Transverse colon (tissue), 4 donors: ENCODE measurements at regions of chr15 and their contacts with region 1.

Region 1: DNA sequence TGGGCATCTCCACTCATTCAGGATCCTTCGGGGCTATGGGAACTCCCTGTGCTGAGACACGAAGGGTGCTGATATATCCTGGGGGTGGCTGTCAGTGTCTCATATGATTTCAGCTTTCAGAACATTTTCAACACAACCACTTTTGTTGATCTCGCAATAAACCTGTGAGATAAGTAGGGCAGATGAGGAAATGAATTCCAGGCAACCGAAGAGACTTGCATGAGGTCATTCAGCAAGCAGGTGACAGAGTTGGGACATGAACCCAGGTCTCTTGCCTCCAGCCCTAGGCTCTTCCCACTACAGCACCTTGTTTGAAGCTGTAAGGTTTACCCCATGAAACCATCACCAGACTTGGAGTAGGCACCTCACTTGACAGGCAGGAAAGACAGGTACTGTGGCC is 16.6 kb downstream of the DUOX1 start:
- DNase-seq: no peak
- H3K4me3 ChIP-seq: no peak overlapping the region
- H3K27ac ChIP-seq: no peak overlapping the region
- H3K4me1 ChIP-seq: no peaks in the 10 kb centered on the region
- H3K27me3 ChIP-seq: no peaks in the 10 kb centered on the region
- CTCF ChIP-seq: no peak
- EP300 ChIP-seq: no peak
- POLR2A ChIP-seq: no peak

Region 2: DNA sequence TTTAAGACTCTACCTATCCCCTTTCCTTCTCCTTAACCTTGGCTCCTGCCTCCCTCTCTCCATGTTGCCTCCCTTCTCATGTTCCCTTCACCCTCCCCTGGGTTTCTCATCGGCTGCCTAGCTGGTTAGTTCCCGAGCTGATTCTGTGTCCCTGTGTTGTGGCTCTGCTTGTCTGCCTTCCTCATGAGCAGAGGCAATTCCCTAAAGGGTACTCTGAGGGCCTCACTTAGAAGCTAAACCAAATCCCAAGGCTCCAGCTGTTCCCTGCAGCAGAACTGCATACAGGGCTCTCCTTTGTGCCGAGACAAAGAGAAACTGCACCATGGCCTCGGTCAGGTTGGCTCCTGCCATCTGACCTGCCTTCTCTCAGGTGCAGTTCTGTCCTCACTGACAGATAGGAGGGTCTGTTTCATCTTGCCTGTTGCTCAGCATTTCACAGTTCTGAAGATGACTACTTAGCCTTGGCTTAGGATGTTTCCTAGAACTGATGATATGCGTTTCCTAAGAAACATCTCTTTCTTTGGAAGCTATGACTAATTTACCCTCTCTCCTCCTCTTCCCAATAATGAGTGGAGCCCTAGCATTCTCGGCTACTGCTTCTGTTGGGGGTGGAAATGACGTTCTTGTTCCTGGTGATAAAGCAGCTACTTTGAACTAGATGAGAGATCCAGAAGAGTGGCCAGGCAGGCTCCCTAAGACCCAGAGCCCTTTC is 10.5 kb after region 1 on chr15:
- in situ Hi-C with region 1: no loop called
- intact Hi-C with region 1: loop called (anchors 1 kb)
- DNase-seq: no peak
- H3K4me3 ChIP-seq: no peak overlapping the region
- H3K27ac ChIP-seq: no peak overlapping the region
- H3K4me1 ChIP-seq: no peaks in the 10 kb centered on the region
- H3K27me3 ChIP-seq: no peaks in the 10 kb centered on the region
- CTCF ChIP-seq: no peak
- EP300 ChIP-seq: no peak
- POLR2A ChIP-seq: no peak

Region 3: GRCh38 chr15:45307230-45307924 is 161.0 kb after region 1 on chr15:
- in situ Hi-C with region 1: no loop called
- intact Hi-C with region 1: no loop called
- DNase-seq: no peak
- H3K4me3 ChIP-seq: peak overlapping the region in 1 of 4 donors; percentile 31
- H3K27ac ChIP-seq: peak overlapping the region in 1 of 4 donors; percentile 41
- H3K4me1 ChIP-seq: peaks cover 0 to 10% (median 3%) of the 10 kb centered on the region in 4 donors
- H3K27me3 ChIP-seq: no peaks in the 10 kb centered on the region
- CTCF ChIP-seq: peak; percentile 44 to 71 (median 62)
- EP300 ChIP-seq: no peak
- POLR2A ChIP-seq: no peak